PC-9 (cell line): ENCODE measurements at regions of chrX and their contacts with region 1.

Region 1: DNA sequence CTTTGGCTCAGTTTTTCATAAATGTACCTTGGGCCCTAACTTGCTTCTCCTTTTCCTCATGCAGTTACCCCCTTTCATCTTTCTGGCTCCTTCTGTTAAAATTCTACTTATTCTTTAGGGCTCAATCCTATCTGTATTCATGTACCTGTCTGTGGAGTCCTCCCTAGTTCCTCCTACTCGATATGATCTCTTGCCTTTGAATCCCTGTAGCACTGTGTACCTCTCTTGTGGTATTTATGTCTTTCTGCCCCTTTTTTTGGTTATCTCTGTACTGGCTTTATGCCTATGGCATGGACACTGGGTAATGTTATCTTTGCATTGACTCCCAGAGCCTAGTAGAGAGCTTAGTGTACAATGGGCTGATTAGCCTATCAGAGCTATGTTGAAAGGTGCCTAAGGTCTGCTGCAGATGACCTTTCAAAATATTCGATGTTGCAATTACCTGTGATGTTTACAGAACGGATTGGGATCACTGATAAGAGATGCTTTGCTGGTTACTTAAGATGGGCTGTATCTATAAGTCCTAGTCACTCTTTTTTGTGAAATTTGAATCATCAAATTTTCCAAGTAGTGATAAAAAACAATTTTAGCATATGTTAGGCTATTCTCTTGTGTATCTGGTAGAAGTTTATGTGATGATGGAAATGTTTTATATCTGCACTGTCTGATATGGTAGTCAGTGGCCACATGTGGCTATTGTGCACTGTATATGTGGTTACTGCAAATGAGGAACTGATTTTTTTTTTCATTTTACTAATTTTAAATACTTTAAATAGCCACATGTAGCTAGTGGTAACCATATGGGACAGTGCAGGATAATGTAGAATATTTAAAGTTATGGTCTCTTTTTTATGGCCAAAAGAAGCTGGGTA is 33.5 kb downstream of the TMEM164 start:
- DNase-seq: peak in 1 of 2 experiments; percentile 59
- H3K4me3 ChIP-seq: no peak overlapping the region
- H3K27ac ChIP-seq: 0 out of 2 replicates have a peak overlapping the region, but pooled peaks have one; percentile 1
- H3K4me1 ChIP-seq: peaks cover 23% of the 10 kb centered on the region
- H3K27me3 ChIP-seq: no peaks in the 10 kb centered on the region
- CTCF ChIP-seq: no peak

Region 2: DNA sequence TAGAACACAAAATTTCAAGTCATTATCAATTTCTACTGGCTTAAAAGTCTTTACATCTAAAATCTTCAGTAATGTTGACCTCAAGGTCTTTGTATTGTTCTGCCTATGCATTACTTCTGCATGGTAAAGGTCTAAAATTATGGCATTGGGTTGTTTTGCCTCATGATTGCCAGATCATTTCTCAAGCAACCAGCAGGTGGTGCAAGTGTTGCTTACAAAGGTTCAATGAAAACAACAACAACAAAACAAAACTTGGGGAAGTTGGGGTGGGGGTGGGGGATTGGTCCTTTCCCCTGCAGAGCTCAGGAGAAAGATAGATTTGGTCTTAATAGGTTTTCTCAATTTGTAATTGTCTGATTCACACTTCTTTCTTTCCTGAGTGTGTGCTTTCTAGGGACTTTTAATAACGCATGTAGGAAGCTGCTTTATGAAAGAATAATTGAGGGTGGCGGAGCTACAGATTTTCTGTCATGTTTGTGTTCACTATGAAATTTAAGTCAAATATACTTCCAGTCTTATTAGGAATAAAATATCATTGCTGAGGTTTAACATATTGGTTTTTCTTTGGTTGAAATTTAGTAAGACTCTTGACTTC is 1451.7 kb before region 1 on chrX:
- CTCF ChIA-PET with region 1: no interaction called
- POLR2A ChIA-PET with region 1: interaction called, 11 read pairs
- intact Hi-C with region 1: no loop called
- DNase-seq: peak in 1 of 2 experiments; percentile 35
- H3K4me3 ChIP-seq: no peak overlapping the region
- H3K27ac ChIP-seq: no peak overlapping the region
- H3K4me1 ChIP-seq: no peaks in the 10 kb centered on the region
- H3K27me3 ChIP-seq: no peaks in the 10 kb centered on the region
- CTCF ChIP-seq: peak; percentile 71

Region 3: DNA sequence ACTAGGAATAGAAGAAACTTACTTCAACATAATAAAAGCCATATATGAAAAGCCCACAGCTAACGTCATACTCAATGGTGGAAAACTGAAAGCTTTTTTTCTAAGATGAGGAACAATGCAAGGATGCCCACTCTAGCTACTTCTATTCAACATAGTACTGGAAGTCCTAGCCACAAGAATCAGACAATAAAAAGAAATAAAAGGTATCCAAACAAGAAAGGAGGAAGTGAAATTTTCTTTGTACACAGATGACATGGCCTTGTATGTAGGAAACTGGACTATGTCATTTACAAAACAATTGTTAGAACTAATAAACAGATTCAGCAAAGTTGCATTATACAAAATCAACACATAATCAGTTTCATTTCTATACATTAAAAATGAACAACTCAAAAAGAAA is 525.3 kb before region 1 on chrX:
- CTCF ChIA-PET with region 1: no interaction called
- POLR2A ChIA-PET with region 1: no interaction called
- intact Hi-C with region 1: no loop called
- DNase-seq: no peak
- H3K4me3 ChIP-seq: no peak overlapping the region
- H3K27ac ChIP-seq: no peak overlapping the region
- H3K4me1 ChIP-seq: no peaks in the 10 kb centered on the region
- H3K27me3 ChIP-seq: peaks cover 27% of the 10 kb centered on the region; the same call in 1 of the 2 replicates
- CTCF ChIP-seq: no peak